ENCODE measurements at regions of chr4 and their contacts with region 1.

Region 1: DNA sequence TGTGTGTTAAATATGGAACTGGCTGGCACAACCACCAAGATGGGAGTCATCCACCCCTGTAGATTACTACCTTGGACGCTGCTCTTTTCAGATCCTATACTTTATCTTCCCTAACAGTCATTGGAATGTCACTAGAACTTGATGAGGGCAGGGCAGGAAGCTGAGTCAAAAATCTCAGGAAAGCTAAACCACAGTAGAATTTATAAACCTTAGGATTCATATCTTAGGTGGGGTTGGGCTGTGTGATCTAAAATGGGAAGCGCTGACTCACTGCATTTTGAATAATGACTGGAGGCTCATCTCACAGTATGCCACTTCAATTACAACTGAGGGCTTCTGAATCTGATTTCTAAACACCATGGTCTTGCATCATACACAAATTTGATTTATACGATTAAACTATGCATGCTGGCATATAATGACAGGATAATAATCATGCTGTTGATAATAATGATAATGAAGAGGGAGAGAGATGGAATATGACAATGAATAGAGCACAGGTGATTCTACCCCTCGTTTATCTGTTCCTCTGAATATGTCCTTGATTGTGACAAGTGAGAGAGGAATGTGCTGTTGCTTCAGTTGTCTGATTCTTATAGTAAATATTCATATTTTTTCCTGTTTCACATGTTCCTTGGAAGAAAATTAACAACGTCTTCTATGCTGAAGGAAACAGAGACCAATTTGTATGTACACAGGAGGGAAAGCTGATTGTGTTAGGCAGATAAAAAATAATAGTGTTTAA is 270.3 kb upstream of the HS3ST1 start:
- DNase-seq: peak; percentile 77
- H3K4me3 ChIP-seq: no peak overlapping the region
- H3K27ac ChIP-seq: peak overlapping the region; percentile 76
- H3K4me1 ChIP-seq: peaks cover 40% of the 10 kb centered on the region
- H3K27me3 ChIP-seq: no peaks in the 10 kb centered on the region
- CTCF ChIP-seq: no peak
- POLR2A ChIP-seq: peak; percentile 11

Region 2: DNA sequence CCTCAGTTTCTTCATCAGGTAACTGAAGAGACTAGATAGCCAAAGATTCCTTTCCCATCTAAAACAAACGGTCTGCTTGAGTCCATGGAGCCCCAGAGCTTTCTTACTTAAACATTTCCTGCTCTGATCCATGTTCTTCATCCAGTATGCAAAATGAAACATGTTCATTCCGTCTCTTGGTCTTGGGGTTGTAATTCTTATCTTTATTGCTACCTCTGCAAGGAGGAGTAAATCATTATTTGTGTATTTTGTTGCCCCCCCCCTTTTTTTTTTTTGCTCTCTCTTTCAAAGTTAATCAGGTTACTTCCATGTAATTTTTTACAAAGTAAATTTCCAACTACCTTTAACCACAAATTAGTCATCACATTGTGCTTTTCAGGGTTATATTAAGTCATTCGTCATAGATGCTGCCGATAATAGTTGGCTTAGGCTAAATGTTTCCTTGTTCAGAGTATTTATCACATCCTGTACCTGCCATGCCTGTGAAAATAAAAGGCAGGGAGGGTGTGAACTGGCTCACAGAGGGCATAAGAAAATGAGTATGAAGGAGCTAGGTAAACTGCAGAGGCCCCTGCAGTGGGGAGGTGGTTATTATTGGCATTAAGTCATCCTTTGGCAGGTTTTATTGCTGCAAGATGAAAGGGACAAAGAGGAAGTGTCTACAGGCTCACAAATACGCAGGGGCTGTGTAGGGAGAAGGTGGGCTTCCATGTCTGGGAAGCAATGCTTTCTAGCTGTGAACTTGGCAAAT is 193.6 kb before region 1 on chr4:
- CTCF ChIA-PET with region 1: no interaction called
- POLR2A ChIA-PET with region 1: no interaction called
- dilution Hi-C with region 1: no loop called
- intact Hi-C with region 1: loop called (anchors 10 kb)
- DNase-seq: peak; percentile 96
- H3K4me3 ChIP-seq: no peak overlapping the region
- H3K27ac ChIP-seq: peak overlapping the region; percentile 54
- H3K4me1 ChIP-seq: peaks cover 17% of the 10 kb centered on the region
- H3K27me3 ChIP-seq: no peaks in the 10 kb centered on the region
- CTCF ChIP-seq: no peak
- POLR2A ChIP-seq: no peak

Region 3: GRCh38 chr4:11623726-11624037 is 75.3 kb before region 1 on chr4:
- CTCF ChIA-PET with region 1: no interaction called
- POLR2A ChIA-PET with region 1: no interaction called
- dilution Hi-C with region 1: no loop called
- intact Hi-C with region 1: loop called (anchors 2 kb)
- DNase-seq: peak; percentile 45
- H3K4me3 ChIP-seq: no peak overlapping the region
- H3K27ac ChIP-seq: no peak overlapping the region
- H3K4me1 ChIP-seq: peaks cover 10% of the 10 kb centered on the region
- H3K27me3 ChIP-seq: no peaks in the 10 kb centered on the region
- CTCF ChIP-seq: peak; percentile 11 to 48
- POLR2A ChIP-seq: no peak

Region 4: DNA sequence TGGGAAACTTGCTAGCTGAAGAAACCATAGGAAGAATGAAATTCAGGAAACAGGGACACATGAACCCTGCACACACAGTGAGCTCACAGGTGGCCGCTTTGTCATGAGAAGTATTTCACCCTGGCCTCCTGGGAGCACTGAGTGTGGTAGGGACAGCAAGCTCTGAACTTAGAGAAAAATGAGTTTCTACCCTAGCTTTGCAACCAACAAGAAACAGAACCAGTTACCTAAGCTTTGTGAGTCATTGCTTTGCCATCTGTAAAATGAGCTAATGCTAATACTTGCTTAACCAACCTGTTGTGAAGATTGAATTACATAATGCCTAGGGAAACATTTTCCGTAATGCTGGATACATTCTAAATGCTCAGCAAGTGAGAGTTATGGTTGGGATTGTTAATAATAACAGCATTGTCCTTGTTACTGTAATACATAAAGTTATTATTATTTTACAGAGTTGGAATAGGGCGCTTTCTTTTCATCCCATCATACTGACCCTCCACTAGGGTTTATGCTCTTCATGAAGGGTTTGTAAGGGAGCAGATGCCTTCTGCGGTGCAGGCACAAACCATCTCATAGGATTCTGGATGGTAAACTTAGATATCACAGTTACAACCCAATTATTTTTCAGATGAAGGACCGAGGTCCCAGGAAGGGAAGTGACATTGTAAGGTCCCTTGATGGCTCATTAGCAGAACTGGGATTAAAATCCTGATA is 63.5 kb before region 1 on chr4:
- CTCF ChIA-PET with region 1: no interaction called
- POLR2A ChIA-PET with region 1: no interaction called
- dilution Hi-C with region 1: no loop called
- intact Hi-C with region 1: no loop called
- DNase-seq: no peak
- H3K4me3 ChIP-seq: no peak overlapping the region
- H3K27ac ChIP-seq: no peak overlapping the region
- H3K4me1 ChIP-seq: peaks cover 4% of the 10 kb centered on the region
- H3K27me3 ChIP-seq: no peaks in the 10 kb centered on the region
- CTCF ChIP-seq: no peak
- POLR2A ChIP-seq: no peak

Region 5: GRCh38 chr4:11720292-11720691 is 21.3 kb after region 1 on chr4:
- CTCF ChIA-PET with region 1: no interaction called
- POLR2A ChIA-PET with region 1: no interaction called
- dilution Hi-C with region 1: no loop called
- intact Hi-C with region 1: loop called (anchors 2 kb)
- DNase-seq: peak; percentile 62
- H3K4me3 ChIP-seq: no peak overlapping the region
- H3K27ac ChIP-seq: no peak overlapping the region
- H3K4me1 ChIP-seq: peaks cover 9% of the 10 kb centered on the region
- H3K27me3 ChIP-seq: no peaks in the 10 kb centered on the region
- CTCF ChIP-seq: peak; percentile 62 to 77
- POLR2A ChIP-seq: no peak

Region 6: GRCh38 chr4:11743236-11743635 is 44.2 kb after region 1 on chr4:
- CTCF ChIA-PET with region 1: no interaction called
- POLR2A ChIA-PET with region 1: no interaction called
- dilution Hi-C with region 1: no loop called
- intact Hi-C with region 1: loop called (anchors 1 kb)
- DNase-seq: peak; percentile 82
- H3K4me3 ChIP-seq: peak overlapping the region in 1 of 3 experiments; percentile 56
- H3K27ac ChIP-seq: peak overlapping the region; percentile 82
- H3K4me1 ChIP-seq: peaks cover 77% of the 10 kb centered on the region
- H3K27me3 ChIP-seq: no peaks in the 10 kb centered on the region
- CTCF ChIP-seq: no peak
- POLR2A ChIP-seq: no peak

Region 7: DNA sequence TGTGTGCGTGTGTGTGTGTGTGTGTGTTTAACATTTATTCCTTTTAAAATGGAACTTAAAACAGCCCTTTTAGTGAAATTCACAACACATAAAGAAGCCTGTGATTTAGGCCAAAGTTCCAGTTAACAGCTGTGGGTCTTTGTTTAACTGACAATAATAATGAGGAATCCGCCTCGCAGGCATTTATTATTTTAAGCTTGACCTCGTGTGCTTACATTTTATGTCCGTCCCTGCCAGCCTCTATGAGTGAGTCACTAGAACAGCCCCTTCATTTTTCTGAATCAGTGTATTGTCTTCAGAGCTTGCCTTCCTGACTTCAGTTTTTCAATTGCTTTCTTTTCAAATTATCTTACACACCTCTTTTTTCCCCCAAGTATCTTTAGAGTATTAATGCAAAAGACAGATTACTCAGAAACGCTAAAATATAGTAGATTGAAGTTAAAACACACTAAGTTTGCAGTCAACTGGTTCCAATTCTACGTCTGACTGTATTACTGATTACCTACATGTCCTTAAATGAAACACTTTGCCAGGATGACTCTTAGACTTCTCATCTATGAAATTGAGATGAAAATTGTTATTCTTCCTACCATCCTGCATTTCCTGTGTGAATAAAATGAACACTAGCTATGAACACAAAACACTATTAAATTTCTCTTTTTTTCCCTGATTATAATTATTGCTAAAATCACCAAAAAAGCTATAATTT is 49.3 kb after region 1 on chr4:
- CTCF ChIA-PET with region 1: no interaction called
- POLR2A ChIA-PET with region 1: no interaction called
- dilution Hi-C with region 1: no loop called
- intact Hi-C with region 1: loop called (anchors 1 kb)
- DNase-seq: peak; percentile 96
- H3K4me3 ChIP-seq: peak overlapping the region in 1 of 3 experiments; percentile 48
- H3K27ac ChIP-seq: peak overlapping the region; percentile 85
- H3K4me1 ChIP-seq: peaks cover 48% of the 10 kb centered on the region
- H3K27me3 ChIP-seq: no peaks in the 10 kb centered on the region
- CTCF ChIP-seq: no peak
- POLR2A ChIP-seq: no peak